Posterior vena cava (tissue), 2 donors: ENCODE measurements at regions of chr18 and their contacts with region 1.

Region 1: GRCh38 chr18:2758309-2758708 is 88.5 kb upstream of the EMILIN2 start:
- DNase-seq: no peak

Region 2: DNA sequence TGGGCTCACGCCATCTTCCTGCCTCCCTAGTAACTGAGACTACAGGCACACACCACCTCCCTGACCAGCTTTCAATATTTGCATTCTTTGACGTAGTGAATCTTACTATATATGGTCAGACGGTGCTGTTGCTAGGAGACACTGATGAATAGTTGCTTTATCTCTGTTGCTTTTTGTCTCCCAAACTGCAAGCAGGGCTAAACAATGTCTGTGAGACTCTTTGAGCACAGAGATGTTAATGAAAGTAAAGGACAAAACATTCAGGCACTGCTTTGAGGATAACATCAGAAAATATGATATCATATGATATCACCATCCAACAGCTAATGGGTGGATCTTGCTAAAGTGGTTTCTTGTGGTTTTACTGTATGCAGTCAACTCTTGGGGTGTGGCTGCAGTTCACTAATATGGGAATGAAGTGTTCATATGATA is 131.5 kb after region 1 on chr18:
- intact Hi-C with region 1: no loop called
- DNase-seq: no peak

Region 3: DNA sequence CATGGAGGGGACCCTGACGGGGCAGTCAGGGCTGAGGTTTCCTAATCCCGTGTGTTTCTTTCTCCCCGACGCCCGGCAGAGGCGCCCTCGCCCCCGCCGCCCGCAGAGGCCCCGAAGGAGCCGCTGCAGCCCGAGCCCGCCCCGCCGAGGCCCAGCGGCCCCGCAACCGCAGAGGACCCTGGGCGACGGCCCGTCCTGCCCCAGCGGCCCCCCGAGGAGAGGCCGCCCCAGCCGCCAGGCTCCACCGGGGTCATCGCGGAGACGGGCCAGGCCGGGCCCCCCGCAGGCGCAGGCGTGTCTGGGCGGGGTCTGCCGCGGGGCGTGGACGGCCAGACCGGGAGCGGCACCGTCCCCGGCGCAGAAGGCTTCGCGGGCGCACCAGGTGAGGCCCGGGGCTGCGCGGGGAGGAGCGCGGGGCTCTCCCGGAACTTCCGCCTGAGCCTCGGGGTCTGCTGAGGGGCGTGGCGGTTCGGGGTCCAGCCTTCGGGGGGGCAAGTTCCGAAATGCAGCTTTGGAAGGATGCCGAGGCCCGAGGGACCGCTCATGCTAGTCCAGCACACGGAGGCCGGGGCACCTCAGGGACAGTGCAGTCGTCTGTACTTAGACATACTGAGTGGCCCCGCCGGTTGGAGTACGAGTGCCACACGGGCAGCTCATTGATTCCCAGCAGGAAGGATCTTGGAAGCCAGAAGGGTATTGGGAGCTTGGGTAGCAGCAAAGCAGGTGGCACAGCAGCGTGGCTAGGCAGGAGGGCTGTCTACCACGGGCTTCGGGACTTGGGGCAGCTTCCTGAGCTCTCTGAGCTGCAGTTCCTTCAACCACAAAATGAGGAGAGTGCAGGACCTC is 148.6 kb after region 1 on chr18:
- intact Hi-C with region 1: loop called in 1 of 2 experiments (anchors 10 kb)
- DNase-seq: peak; percentile 81